ENCODE measurements at regions of chr7 and their contacts with region 1.

Region 1: GRCh38 chr7:66869660-66870450 is 51.2 kb upstream of the TMEM248 start:
- DNase-seq: no peak
- ATAC-seq: no peak; the same call in 2 of the 3 replicates
- H3K4me3 ChIP-seq: no peak overlapping the region
- H3K27ac ChIP-seq: no peak overlapping the region
- H3K4me1 ChIP-seq: no peaks in the 10 kb centered on the region
- H3K27me3 ChIP-seq: no peaks in the 10 kb centered on the region
- CTCF ChIP-seq: no peak
- EP300 ChIP-seq: no peak
- POLR2A ChIP-seq: no peak
- RAD21 ChIP-seq: no peak

Region 2: DNA sequence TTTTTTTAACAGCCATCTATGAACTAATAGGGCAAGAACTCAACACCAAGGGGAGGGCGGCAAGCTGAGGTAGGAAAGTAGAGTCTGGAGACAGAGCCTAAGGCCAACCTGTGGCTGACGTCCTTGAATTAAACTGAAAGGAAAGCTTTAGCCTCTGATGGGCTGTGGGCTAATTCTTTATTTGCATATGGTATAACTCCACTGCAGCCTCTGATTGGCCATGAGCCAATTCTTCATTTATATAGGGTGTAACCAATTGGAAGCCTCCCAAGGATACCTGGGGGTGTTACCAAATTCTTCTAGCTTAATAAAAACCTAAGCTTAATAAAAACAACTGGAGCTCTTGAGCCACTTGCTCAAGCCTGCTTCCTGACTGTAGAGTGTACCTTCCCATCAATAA is 137.1 kb after region 1 on chr7:
- CTCF ChIA-PET with region 1: no interaction called
- POLR2A ChIA-PET with region 1: interaction called, 12 read pairs
- RAD21 ChIA-PET with region 1: no interaction called
- SMC1A ChIA-PET with region 1: no interaction called
- in situ Hi-C with region 1: no loop called
- intact Hi-C with region 1: no loop called
- DNase-seq: no peak
- ATAC-seq: no peak
- H3K4me3 ChIP-seq: no peak overlapping the region
- H3K27ac ChIP-seq: no peak overlapping the region
- H3K4me1 ChIP-seq: no peaks in the 10 kb centered on the region
- H3K27me3 ChIP-seq: no peaks in the 10 kb centered on the region
- CTCF ChIP-seq: no peak
- EP300 ChIP-seq: no peak
- POLR2A ChIP-seq: no peak
- RAD21 ChIP-seq: no peak